ENCODE measurements at regions of chr1 and their contacts with region 1.

Region 1: GRCh38 chr1:235122348-235122747 is 6.3 kb downstream of the TOMM20 start:
- DNase-seq: no peak
- H3K4me3 Mint-ChIP-seq: no peak overlapping the region
- H3K27ac Mint-ChIP-seq: peak overlapping the region; percentile 56
- H3K4me1 Mint-ChIP-seq: peaks cover 45% of the 10 kb centered on the region
- H3K27me3 Mint-ChIP-seq: no peaks in the 10 kb centered on the region
- CTCF ChIP-seq: no peak

Region 2: GRCh38 chr1:235093696-235094592 is 28.4 kb before region 1 on chr1:
- CTCF ChIA-PET with region 1: interaction called, 36 read pairs
- POLR2A ChIA-PET with region 1: interaction called, 3 read pairs
- intact Hi-C with region 1: no loop called
- DNase-seq: peak; percentile 83
- H3K4me3 Mint-ChIP-seq: no peak overlapping the region
- H3K27ac Mint-ChIP-seq: no peak overlapping the region
- H3K4me1 Mint-ChIP-seq: peaks cover 6% of the 10 kb centered on the region
- H3K27me3 Mint-ChIP-seq: no peaks in the 10 kb centered on the region
- CTCF ChIP-seq: peak; percentile 100

Region 3: DNA sequence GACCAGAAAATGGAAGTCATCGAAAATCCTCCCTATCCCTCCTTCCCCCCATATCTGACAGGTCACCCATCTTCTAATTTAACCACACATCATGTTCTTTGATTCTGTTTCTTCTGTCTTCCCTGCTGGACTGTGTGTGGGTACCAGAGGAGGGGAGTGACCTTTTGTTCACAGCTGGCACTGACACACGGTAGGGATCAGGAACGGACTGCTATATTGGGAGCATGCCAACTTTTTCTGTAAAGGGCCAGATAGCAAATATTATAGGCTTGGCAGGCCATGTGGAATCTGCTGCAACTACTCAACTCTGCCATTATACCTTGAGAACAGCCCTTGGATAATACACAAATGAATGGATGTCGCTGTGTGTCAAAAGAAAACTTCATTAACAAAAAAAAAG is 13.8 kb after region 1 on chr1:
- CTCF ChIA-PET with region 1: interaction called, 3 read pairs
- POLR2A ChIA-PET with region 1: interaction called, 11 read pairs
- intact Hi-C with region 1: no loop called
- DNase-seq: no peak
- H3K4me3 Mint-ChIP-seq: no peak overlapping the region
- H3K27ac Mint-ChIP-seq: no peak overlapping the region
- H3K4me1 Mint-ChIP-seq: no peaks in the 10 kb centered on the region
- H3K27me3 Mint-ChIP-seq: no peaks in the 10 kb centered on the region
- CTCF ChIP-seq: no peak